ENCODE measurements at regions of chr1 and their contacts with region 1.

Region 1: DNA sequence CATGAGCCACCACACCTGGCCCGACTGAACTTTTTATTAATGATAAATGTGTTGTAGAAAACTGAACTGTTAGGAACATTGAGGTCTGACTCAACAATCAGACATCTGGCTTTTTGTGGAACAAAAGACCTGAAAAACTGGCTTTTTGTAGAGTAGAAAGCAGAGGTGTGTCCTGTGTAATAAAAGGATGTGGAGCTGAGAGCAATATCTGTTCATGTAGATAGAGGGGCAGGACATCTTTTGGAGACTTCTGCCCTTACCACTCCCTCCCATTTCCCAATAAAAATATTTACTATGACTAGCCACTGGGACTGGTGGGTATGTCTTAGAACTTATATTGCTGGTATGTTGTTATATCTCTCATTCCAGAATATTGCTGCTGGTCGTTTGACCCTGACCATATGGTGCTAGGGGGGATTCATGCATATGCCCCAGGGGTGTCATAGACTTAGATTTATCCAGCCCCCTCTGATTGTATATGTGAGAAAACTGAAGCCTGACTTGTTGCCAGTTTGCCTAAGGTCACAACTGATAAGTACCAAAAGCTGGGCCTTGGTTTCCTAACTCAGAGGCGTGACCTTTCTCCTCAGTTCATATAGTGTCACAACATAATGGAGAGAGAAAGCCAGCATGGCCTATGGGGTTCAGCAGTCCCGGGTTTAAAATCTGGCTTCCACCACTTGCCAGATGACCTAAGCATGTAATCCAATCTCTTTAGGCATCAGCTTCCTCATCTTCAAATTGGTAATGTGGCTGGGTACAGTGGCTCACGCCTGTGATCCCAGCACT is 33.5 kb upstream of the PIGV start:
- DNase-seq: no peak
- ATAC-seq: no peak
- H3K4me3 ChIP-seq: no peak overlapping the region
- H3K27ac ChIP-seq: peak overlapping the region; percentile 39 to 74 (median 64)
- H3K4me1 ChIP-seq: peaks cover 57 to 58% of the 10 kb centered on the region in 2 donors
- H3K27me3 ChIP-seq: no peaks in the 10 kb centered on the region
- CTCF ChIP-seq: no peak
- POLR2A ChIP-seq: no peak

Region 2: DNA sequence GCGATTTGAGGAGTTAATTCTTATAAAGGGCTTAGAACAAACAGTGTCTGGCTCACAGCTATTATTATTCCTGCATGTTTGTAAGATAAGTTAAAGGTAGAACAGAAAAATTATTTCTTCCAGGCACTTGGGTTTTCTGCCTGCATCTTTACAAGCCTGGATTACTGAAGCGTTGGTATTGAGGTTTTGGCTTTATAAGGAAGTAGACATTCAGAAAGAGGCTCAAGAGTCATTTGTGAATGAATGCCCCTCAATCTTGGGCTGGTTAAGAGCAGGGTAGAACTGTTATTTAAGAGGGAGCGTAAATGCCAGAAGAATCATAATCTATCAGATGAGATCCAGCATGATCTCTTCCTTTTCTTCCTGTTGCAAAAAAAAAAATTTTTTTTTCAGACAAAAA is 135.7 kb before region 1 on chr1:
- in situ Hi-C with region 1: no loop called
- intact Hi-C with region 1: no loop called
- DNase-seq: no peak
- ATAC-seq: no peak
- H3K4me3 ChIP-seq: no peak overlapping the region
- H3K27ac ChIP-seq: peak overlapping the region in 3 of 4 donors; percentile 89 to 98 (median 96)
- H3K4me1 ChIP-seq: peaks cover 13 to 15% of the 10 kb centered on the region in 2 donors
- H3K27me3 ChIP-seq: no peaks in the 10 kb centered on the region
- CTCF ChIP-seq: no peak
- POLR2A ChIP-seq: no peak

Region 3: DNA sequence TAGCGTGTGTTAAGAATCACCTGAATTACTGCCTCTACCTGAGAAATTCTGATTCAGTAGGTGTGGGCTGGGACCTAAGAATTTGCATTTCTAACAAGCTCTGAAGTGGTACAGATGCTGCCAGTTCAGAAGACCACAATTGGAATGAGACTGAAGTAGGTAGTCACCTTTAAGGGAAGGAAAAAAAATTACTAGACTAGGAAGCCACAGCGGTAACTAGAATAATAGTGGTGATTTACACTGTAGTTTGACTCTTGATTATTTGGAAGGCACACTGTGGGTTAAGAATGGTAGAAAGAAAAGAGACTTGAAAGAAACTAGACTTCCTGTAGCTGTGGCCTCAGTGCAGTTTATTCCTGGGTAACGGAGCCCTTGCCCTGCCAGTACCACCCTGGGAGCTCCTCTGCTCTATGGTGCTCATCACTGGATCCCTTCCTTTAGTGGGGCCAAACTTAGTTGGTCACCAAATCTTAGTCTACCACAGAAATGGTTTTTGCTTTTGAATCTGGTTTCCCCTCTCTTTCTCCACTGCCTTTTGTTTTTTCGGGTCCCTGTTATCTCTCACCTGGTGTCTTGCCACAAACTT is 14.9 kb before region 1 on chr1:
- in situ Hi-C with region 1: no loop called
- intact Hi-C with region 1: loop called (anchors 2 kb)
- DNase-seq: no peak
- ATAC-seq: no peak
- H3K4me3 ChIP-seq: no peak overlapping the region
- H3K27ac ChIP-seq: peak overlapping the region in 2 of 4 donors; percentile 13 to 29
- H3K4me1 ChIP-seq: peaks cover 44 to 47% of the 10 kb centered on the region in 2 donors
- H3K27me3 ChIP-seq: no peaks in the 10 kb centered on the region
- CTCF ChIP-seq: no peak
- POLR2A ChIP-seq: no peak

Measured in gastrocnemius medialis (tissue), 4 donors.